Dendritic cell treated with granulocyte-macrophage colony-stimulating factor and Interleukin-4, amounts not matched to agents 40 ng/mL and 50 ng/mL, for 4 days (primary cell): ENCODE measurements at regions of chr16 and their contacts with region 1.

Region 1: DNA sequence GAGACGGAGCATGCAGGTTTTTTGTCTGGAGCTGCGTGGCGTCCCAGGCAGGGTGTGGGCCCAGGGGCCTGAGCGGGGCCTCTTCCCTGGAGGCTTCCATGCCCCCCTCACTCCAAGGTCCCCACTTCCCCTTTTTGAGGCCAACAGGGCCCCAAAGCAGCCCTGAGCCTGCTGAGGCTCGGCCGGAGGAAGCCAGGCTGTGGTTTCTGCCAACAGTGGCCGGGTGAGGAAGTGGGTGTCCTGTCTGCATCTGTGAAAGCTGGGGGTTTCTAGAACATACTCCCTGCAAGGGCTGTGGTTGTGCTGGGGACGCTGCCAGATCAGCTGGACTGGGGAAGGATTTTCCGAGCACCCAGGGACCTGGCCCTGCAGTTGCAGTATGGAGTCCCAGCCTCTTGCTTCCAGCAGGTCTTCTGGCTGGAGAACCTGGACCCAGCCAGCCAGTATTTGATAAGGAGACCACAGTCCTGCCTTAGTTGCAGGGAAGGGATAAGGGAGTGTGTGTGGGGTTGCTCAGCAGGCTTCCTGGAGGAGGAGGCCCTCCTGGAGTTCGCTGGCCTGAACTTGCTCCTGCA is 15.7 kb downstream of the ADCY7 start:
- H3K4me3 Mint-ChIP-seq: peak overlapping the region; percentile 87
- H3K27ac Mint-ChIP-seq: peak overlapping the region; percentile 90
- H3K4me1 Mint-ChIP-seq: peaks cover 86% of the 10 kb centered on the region
- H3K27me3 Mint-ChIP-seq: no peaks in the 10 kb centered on the region

Region 2: GRCh38 chr16:50153453-50154368 is 128.3 kb before region 1 on chr16:
- intact Hi-C with region 1: no loop called
- H3K4me3 Mint-ChIP-seq: peak overlapping the region; percentile 93
- H3K27ac Mint-ChIP-seq: peak overlapping the region; percentile 80
- H3K4me1 Mint-ChIP-seq: peaks cover 37% of the 10 kb centered on the region
- H3K27me3 Mint-ChIP-seq: no peaks in the 10 kb centered on the region

Region 3: GRCh38 chr16:50245417-50246298 is 36.4 kb before region 1 on chr16:
- intact Hi-C with region 1: loop called (anchors 2 kb)
- H3K4me3 Mint-ChIP-seq: peak overlapping the region; percentile 72
- H3K27ac Mint-ChIP-seq: peak overlapping the region; percentile 79
- H3K4me1 Mint-ChIP-seq: peaks cover 83% of the 10 kb centered on the region
- H3K27me3 Mint-ChIP-seq: no peaks in the 10 kb centered on the region

Region 4: GRCh38 chr16:50266337-50267091 is 15.5 kb before region 1 on chr16 and contains the start of gene ADCY7:
- intact Hi-C with region 1: loop called (anchors 2 kb)
- H3K4me3 Mint-ChIP-seq: peak within 1 kb of the TSS; percentile 91
- H3K27ac Mint-ChIP-seq: peak within 1 kb of the TSS; percentile 88
- H3K4me1 Mint-ChIP-seq: peaks cover 94% of the 10 kb centered on the region
- H3K27me3 Mint-ChIP-seq: no peaks in the 10 kb centered on the region

Region 5: DNA sequence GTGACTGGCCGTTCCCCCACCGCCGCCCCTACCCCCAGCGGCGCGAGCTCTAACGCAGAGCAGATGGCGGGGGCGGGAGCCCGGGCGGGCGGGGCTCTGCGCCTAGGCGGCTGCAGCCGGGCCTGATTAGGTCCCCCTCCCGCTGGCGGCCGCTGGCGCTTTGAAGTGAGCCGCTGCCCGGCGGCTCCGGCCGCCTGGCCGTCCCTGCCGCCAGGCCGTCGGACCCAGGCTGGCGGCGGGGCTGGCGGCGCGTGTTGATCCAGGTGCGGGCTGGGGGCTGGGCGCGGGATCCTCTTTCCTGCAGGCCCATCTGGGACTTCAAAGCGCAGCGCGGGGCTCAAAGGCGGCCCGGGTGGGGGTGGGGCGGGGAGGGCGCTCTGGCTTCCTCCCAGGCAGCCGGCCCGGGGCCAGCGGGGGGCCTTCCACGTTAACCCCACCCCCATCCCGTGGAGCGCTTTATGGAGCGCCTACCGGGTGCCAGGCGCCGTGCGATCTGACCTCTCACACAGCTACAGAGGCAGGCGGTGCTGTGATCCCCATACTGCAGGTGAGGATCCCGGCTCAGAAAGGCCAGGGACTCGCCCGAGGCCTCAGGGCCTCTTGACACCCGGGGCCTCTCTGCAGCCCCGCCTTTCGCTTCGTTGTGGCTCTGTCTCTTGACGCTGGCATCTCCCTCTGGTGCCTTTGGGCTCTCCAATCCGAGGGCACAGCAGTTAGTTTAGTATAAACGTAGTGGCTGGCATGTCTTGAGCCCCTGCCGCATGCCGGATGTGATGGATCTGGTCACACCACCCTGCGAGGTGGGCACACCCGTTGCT is 186.1 kb after region 1 on chr16:
- intact Hi-C with region 1: no loop called
- H3K4me3 Mint-ChIP-seq: no peak overlapping the region
- H3K27ac Mint-ChIP-seq: no peak overlapping the region
- H3K4me1 Mint-ChIP-seq: no peaks in the 10 kb centered on the region
- H3K27me3 Mint-ChIP-seq: peaks cover 57% of the 10 kb centered on the region